Motor neuron (in vitro differentiated cells): ENCODE measurements at regions of chr7 and their contacts with region 1.

Region 1: GRCh38 chr7:37234928-37235327 is 213.7 kb downstream of the ELMO1 start:
- ATAC-seq: no peak
- H3K4me3 ChIP-seq: no peak overlapping the region
- H3K27ac ChIP-seq: no peak overlapping the region
- H3K4me1 ChIP-seq: peaks cover 0 to 6% of the 10 kb centered on the region in 2 donors

Region 2: GRCh38 chr7:37448636-37449361 is 213.9 kb after region 1 on chr7 and contains the start of gene ELMO1:
- in situ Hi-C with region 1: loop called in 2 of 9 experiments (anchors 25 kb)
- ATAC-seq: peak; percentile 79 to 91 (median 88)
- H3K4me3 ChIP-seq: peak within 1 kb of the TSS; percentile 69 to 92 (median 72)
- H3K27ac ChIP-seq: peak within 1 kb of the TSS; percentile 48 to 70
- H3K4me1 ChIP-seq: peaks cover 13 to 14% of the 10 kb centered on the region in 2 donors
- total RNA-seq, gene ELMO1: 4.2 to 121 (median 40.0) TPM

Region 3: GRCh38 chr7:37833107-37833817 is 598.3 kb after region 1 on chr7:
- in situ Hi-C with region 1: loop called in 2 of 9 experiments (anchors 25 kb)
- ATAC-seq: peak in 2 of 8 experiments; percentile 28 to 36
- H3K4me3 ChIP-seq: no peak overlapping the region
- H3K27ac ChIP-seq: no peak overlapping the region
- H3K4me1 ChIP-seq: no peaks in the 10 kb centered on the region

Region 4: GRCh38 chr7:37853474-37853873 is 618.5 kb after region 1 on chr7:
- in situ Hi-C with region 1: loop called in 3 of 9 experiments (anchors 25 kb)
- ATAC-seq: no peak
- H3K4me3 ChIP-seq: no peak overlapping the region
- H3K27ac ChIP-seq: no peak overlapping the region
- H3K4me1 ChIP-seq: no peaks in the 10 kb centered on the region